KBM-7 (cell line): ENCODE measurements at regions of chr10 and their contacts with region 1.

Region 1: DNA sequence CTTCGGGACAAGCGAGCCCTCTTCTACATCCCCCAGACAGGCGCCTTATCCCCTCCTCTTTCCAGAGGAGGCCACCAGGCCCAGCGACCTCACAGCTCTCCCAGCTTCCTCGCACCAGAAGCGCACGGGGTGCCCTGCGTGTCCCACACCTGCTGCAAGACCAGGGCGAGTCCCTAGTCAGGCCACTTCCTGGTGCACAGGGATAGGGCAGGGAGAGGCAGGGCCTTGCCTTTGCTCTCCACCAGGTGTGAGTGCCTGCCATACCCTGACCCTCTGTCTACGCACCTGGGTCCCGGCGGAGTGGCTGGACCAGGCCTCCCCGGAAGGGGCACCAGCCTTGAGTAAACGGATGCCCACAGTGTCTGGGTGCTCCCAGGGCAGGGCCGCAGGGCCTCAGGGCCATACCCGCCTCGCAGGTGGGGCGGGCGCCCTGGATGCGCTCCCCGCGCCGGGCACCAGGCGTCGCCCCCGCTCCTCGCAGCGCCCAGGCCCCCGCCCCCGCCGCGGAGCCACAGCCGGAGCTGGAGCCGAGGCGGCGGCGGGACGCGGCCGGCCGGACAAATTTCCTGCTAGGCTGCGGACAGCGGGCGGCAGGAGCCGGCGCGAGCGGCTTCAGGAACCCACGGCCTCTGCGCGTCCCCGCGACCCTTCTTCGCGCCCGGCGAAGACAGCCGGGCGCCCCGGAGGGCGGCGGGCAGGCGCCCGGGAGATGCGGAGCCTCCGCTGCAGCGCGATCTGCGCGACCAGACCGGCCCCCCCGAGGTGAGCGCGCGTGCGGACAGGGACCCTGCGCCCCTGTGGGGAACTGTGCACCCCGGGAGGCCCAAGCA is at the start of gene PTPRE:
- DNase-seq: peak; percentile 38

Region 2: DNA sequence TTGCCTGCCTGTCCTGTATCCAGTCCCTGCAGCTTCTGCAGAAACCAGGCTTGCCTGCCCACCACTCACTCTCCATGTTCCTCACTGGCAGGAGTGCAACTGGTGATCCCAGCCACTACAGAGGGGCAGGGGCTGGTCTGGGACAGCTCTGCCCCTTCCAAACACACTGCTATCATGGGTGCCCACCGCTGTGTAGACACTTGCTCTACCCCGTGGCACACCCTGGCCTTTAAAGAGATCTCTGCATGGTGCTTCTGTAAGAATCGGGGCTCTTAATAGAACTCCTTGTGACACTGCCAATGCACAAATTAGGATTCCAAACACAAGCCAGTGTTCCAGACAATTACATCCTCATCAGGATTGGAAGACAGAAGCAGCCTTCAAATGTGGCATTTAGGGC is 1278.0 kb before region 1 on chr10:
- in situ Hi-C with region 1: no loop called
- DNase-seq: no peak

Region 3: GRCh38 chr10:127506094-127506493 is 400.7 kb before region 1 on chr10:
- in situ Hi-C with region 1: no loop called
- DNase-seq: peak; percentile 27

Region 4: GRCh38 chr10:128011175-128011979 is 104.6 kb after region 1 on chr10:
- in situ Hi-C with region 1: loop called (anchors 25 kb)
- DNase-seq: peak; percentile 85